Sigmoid colon (tissue), 7 donors: ENCODE measurements at regions of chr17 and their contacts with region 1.

Region 1: GRCh38 chr17:33113276-33113990 is 121.8 kb downstream of the SPACA3 start:
- DNase-seq: no peak
- H3K4me3 ChIP-seq: no peak overlapping the region
- H3K27ac ChIP-seq: no peak overlapping the region
- H3K4me1 ChIP-seq: peaks cover 0 to 28% (median 17%) of the 10 kb centered on the region in 4 donors
- H3K27me3 ChIP-seq: peaks cover 0 to 2% (median 0%) of the 10 kb centered on the region in 3 donors
- CTCF ChIP-seq: no peak
- EP300 ChIP-seq: no peak
- POLR2A ChIP-seq: no peak

Region 2: DNA sequence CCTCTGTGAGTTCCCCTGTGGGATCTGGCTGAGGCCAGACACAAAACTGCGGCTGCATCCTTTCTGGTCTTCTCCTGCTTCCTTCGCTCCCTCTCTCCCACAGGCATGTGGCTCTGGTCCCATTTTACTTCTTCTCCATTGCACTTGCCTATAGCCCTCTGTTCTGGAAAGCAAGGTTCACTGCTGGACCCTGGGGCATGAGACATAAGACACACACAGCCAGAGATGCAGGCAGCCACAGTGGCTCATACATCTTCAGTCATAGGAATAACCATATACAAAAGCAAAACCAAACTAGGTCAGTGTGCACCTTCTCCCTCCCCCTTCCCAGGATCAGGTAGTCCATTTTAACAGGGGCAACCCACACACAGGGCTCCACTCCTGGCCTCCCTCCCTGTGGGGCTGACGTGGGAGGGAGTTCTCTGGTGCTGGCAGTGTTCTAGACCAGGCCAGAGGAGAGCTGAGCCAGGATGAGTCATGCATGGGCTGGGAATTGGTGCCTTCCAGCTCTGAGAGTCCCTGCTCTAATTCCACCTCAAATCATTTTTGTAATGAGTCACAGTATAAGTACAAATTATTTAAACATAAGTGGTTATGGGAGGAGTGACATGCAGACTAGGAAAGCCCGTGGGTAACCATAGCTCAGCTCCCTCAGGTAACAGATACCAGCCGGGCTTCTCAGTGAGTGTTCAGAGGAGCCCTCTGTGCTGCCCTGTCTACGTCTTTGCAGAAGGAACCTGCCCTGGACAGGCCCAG is 121.7 kb after region 1 on chr17:
- intact Hi-C with region 1: loop called (anchors 10 kb)
- DNase-seq: peak; percentile 85
- H3K4me3 ChIP-seq: no peak overlapping the region
- H3K27ac ChIP-seq: peak overlapping the region in 3 of 4 donors; percentile 60 to 79 (median 76)
- H3K4me1 ChIP-seq: peaks cover 0 to 34% (median 29%) of the 10 kb centered on the region in 4 donors
- H3K27me3 ChIP-seq: no peaks in the 10 kb centered on the region
- CTCF ChIP-seq: no peak
- EP300 ChIP-seq: peak in 1 of 4 donors; percentile 28
- POLR2A ChIP-seq: no peak